Prostate gland (tissue), 2 donors: ENCODE measurements at regions of chr19 and their contacts with region 1.

Region 1: GRCh38 chr19:47600246-47601179 is 8.4 kb upstream of the BICRA start:
- DNase-seq: peak; percentile 99
- H3K4me3 ChIP-seq: peak overlapping the region; percentile 38 to 57
- H3K27ac ChIP-seq: peak overlapping the region; percentile 84 to 92
- H3K4me1 ChIP-seq: peaks cover 3% of the 10 kb centered on the region
- H3K27me3 ChIP-seq: no peaks in the 10 kb centered on the region
- CTCF ChIP-seq: peak in 1 of 4 experiments; percentile 44
- POLR2A ChIP-seq: peak; percentile 96

Region 2: DNA sequence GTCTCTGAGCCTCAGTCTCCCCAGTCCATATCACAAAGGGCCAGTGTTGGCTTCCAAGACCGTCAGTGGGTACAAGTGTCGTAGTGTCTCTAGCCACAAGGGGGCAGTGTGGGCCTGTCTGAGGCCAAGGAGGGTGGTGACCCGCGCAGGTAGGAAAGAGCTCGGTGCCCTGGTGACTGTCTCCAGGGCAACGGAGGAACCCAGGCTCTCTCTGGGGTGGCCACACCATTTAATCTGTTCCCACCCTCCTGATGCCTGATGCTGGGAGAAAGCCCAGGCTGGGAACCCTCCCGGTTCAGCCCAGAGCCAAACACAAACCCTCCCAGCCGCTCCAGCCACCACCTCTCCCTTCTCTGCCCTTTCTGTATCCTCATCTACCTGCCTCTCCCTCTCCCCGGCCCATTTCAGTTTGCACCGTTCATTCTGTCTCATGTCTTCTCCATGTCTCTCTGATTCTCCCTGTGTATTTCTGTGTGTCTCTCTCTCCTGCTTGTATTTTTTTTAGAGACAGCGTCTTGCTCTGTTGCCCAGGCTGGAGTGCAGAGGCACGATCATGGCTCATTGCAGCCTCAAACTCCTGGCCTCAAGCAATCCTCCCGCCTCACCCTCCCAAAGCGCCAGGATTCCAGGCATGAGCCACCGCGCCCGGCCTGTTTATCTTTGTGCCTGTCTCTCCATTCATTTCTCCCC is 163.7 kb before region 1 on chr19:
- intact Hi-C with region 1: loop called (anchors 10 kb)
- DNase-seq: peak; percentile 77
- H3K4me3 ChIP-seq: no peak overlapping the region
- H3K27ac ChIP-seq: no peak overlapping the region
- H3K4me1 ChIP-seq: no peaks in the 10 kb centered on the region
- H3K27me3 ChIP-seq: no peaks in the 10 kb centered on the region
- CTCF ChIP-seq: peak; percentile 80 to 97 (median 92)
- POLR2A ChIP-seq: no peak

Region 3: GRCh38 chr19:47514869-47515588 is 85.5 kb before region 1 on chr19 and contains the start of gene NAPA:
- intact Hi-C with region 1: loop called (anchors 1 kb)
- DNase-seq: peak; percentile 100
- H3K4me3 ChIP-seq: peak within 1 kb of the TSS; percentile 78 to 97
- H3K27ac ChIP-seq: peak within 1 kb of the TSS; percentile 97 to 98
- H3K4me1 ChIP-seq: peaks cover 23% of the 10 kb centered on the region
- H3K27me3 ChIP-seq: no peaks in the 10 kb centered on the region
- CTCF ChIP-seq: peak in 1 of 4 experiments; percentile 20
- POLR2A ChIP-seq: peak; percentile 98
- total RNA-seq, gene NAPA: 263 to 422 TPM

Region 4: GRCh38 chr19:47778089-47778953 is 177.8 kb after region 1 on chr19 and contains the start of gene SELENOW:
- intact Hi-C with region 1: loop called (anchors 10 kb)
- DNase-seq: peak; percentile 70
- H3K4me3 ChIP-seq: peak within 1 kb of the TSS; percentile 89 to 94
- H3K27ac ChIP-seq: peak within 1 kb of the TSS; percentile 95 to 99
- H3K4me1 ChIP-seq: peaks cover 9% of the 10 kb centered on the region
- H3K27me3 ChIP-seq: no peaks in the 10 kb centered on the region
- CTCF ChIP-seq: peak in 1 of 4 experiments; percentile 10
- POLR2A ChIP-seq: peak; percentile 95
- total RNA-seq, gene SELENOW: 301 to 565 TPM